Activated T-helper 1 cell treated with anti-CD3 and anti-CD28 coated beads, Interleukin-12 subunit alpha, Interleukin-12 subunit beta, Interleukin-2, Interleukin-4 antibody, amounts not matched to agents 30 ng/mL and 10 ng/mL and 1 ng/mL, durations not matched to agents 14 hours and 24 hours and 36 hours (primary cell): ENCODE measurements at regions of chr17 and their contacts with region 1.

Region 1: DNA sequence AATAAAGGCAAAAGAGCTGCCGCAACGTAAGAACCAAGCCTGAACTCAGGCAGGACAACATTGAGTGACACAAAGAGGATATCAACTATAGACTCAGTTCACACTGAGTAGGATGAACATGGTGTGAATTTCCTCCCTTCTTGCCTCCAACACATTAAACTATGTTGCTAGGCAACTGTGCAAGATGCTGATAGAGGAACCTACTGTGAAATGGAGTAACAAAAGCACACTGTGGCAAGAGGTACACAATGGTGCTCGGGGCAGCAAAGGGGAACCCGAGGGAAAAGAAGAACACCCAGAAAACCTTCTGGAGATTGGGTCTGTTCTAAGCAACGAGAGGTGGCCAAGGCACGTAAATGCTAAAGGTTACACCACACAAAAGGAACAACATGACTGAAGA is 34.1 kb downstream of the GRB2 start:
- DNase-seq: no peak
- H3K4me3 Mint-ChIP-seq: peak overlapping the region; percentile 65
- H3K27ac Mint-ChIP-seq: peak overlapping the region; percentile 92
- H3K4me1 Mint-ChIP-seq: peaks cover 60% of the 10 kb centered on the region
- H3K27me3 Mint-ChIP-seq: no peaks in the 10 kb centered on the region

Region 2: DNA sequence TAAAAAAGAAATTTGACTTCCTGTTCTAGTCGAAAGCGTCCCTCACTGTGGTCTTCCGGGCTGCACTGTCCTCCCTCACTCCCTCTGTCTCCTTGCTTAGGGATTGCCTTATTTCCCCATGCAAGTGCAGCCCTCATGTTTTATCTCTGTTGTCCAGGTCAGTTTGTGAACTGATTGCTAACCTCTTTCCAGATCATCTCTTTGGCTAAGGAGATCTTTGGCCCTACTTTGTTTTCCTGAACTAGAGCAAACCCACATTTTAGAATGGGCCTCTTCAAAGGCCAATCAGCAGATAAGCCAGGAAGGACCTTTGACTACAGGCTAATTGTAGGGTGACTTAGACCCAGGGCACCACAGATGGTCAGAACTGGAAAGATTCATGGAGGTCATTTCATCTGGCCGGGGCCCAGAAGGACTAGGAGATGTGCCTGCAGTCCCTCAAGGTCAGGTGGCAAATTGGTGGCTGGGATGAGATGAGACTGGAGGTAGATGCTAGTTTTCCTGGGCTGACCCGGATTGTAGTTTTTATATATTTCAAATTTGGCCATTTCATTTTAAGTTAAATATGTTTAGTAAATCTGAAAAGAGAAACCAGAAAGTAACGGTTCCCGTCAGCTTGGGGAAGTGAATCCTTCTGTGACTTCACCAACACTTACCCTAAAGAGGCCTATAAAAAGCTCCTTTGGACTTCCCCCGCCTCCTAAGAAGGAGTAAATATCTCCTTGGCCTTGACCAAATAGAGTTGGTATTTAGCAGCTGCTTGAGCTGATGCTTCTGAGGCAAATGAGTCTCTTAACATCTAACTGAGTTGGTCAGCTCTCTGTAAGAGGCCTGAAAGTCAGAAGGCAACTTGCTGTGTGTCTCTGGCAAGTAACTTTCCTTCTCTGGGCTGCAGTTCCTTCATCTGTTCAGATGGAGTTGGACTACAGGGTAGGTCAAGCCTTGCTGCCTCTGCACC is 75.9 kb before region 1 on chr17:
- intact Hi-C with region 1: no loop called
- DNase-seq: peak; percentile 49
- H3K4me3 Mint-ChIP-seq: peak overlapping the region; percentile 49
- H3K27ac Mint-ChIP-seq: peak overlapping the region; percentile 96
- H3K4me1 Mint-ChIP-seq: peaks cover 24% of the 10 kb centered on the region
- H3K27me3 Mint-ChIP-seq: no peaks in the 10 kb centered on the region

Region 3: DNA sequence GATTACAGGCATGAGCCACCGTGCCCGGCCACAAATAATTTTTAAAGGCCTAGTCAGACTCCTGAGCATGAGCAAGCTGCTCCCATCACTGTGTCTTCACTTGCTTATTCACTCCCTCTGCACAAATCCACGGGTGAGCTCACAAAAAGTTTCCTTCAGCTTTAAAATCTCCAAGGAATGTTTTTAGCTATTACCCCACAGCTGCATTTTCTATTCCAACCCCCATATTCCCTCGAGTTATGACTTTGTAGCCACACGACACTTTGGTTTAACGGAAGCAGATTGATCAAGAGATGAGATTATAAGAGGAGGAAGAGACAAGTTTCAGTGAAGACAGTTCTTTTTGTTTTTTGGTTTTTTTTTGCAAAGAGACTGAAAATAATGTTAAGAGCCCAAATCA is 33.0 kb before region 1 on chr17:
- intact Hi-C with region 1: loop called (anchors 5 kb)
- DNase-seq: no peak
- H3K4me3 Mint-ChIP-seq: peak overlapping the region; percentile 63
- H3K27ac Mint-ChIP-seq: peak overlapping the region; percentile 90
- H3K4me1 Mint-ChIP-seq: peaks cover 74% of the 10 kb centered on the region
- H3K27me3 Mint-ChIP-seq: no peaks in the 10 kb centered on the region

Region 4: DNA sequence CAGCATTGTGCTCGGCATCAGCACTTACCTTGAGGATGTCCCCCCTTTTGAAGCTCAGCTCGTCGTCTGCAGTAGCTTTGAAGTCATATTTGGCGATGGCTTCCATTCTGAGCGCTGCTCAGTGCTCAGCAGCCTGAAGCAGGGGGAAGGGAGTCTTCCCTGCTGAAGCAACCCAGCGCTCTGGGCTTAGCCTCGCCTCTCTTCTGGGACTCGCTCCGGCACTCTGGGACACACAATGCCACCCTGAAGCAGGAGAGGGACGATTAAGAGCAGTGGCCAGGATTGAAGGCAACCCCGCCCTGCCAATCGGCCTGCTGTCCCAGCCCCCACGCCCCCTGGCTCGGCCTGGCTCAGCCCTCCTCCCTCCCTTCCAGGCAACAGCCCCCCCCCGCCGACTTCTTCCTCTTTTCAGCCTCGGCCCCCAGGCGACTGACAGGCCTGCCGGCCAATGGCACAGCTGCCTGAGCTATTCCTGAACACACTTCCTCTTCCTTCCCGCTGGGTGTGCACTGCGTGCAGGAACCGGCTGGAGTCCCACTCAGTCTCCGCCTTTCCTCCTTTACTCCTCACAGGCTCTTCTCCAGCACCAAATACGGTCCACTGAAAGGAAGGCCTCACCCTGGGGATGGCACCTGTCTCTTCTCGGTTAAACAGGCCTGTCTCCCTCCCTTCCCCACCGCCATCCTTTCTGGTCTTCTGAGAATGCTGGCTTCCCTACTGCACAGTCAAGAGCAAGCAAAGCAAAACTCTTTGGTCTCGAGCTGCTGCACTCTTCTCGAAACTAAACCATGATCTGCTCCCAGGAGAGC is 22.4 kb after region 1 on chr17:
- intact Hi-C with region 1: loop called (anchors 1 kb)
- DNase-seq: peak; percentile 76
- H3K4me3 Mint-ChIP-seq: peak overlapping the region; percentile 86
- H3K27ac Mint-ChIP-seq: peak overlapping the region; percentile 78
- H3K4me1 Mint-ChIP-seq: peaks cover 76% of the 10 kb centered on the region
- H3K27me3 Mint-ChIP-seq: no peaks in the 10 kb centered on the region